CD14-positive monocyte (primary cell): ENCODE measurements at regions of chr5 and their contacts with region 1.

Region 1: DNA sequence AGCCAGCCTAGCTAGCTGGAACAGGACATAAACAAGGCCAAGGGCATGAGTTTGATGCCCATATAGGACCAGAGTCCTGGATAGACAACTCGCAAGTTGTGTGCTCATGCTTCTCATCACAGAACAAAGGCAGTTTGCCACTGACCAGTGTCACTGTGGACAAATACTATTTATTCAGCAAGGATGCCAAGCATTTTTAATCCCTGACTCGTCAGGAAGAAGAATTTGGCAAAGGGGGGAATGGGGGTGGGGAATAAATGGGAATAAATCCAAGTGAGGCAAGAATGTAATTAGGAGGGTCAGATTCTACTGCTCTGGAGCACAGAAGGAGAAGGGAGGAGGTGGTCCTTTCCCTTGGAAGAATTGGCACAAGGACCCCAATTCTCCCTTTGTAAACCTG is 46.8 kb upstream of the ANKRD55 start:
- DNase-seq: no peak
- H3K4me3 ChIP-seq: no peak overlapping the region
- H3K4me3 Mint-ChIP-seq: no peak overlapping the region
- H3K27ac ChIP-seq: no peak overlapping the region
- H3K27ac Mint-ChIP-seq: no peak overlapping the region
- H3K4me1 ChIP-seq: no peaks in the 10 kb centered on the region
- H3K4me1 Mint-ChIP-seq: peaks cover 4% of the 10 kb centered on the region
- H3K27me3 ChIP-seq: no peaks in the 10 kb centered on the region
- H3K27me3 Mint-ChIP-seq: peaks cover 0 to 2% (median 0%) of the 10 kb centered on the region in 3 donors
- CTCF ChIP-seq: no peak

Region 2: DNA sequence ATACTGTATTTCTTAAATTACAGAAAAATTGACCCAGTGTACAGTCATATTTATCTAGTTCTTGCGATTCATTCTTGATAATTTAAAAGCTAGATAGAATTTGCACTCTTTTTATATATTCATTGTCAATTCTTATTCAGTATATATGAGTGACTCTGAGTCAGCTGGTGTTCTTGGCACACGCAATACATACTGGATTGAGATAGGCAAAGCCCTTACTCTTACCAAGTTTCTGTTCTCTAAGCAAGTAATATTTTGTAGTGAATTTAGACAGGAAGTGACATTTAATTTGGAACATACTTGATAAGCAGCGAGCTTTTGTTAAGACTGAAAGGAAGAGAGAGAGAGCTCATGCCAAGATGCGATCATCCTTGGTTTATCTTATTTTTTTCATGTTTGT is 951.6 kb after region 1 on chr5:
- intact Hi-C with region 1: loop called in 1 of 2 experiments (anchors 10 kb)
- DNase-seq: no peak
- H3K4me3 ChIP-seq: no peak overlapping the region
- H3K4me3 Mint-ChIP-seq: no peak overlapping the region
- H3K27ac ChIP-seq: no peak overlapping the region
- H3K27ac Mint-ChIP-seq: peak overlapping the region in 2 of 7 donors; percentile 26 to 77
- H3K4me1 ChIP-seq: no peaks in the 10 kb centered on the region
- H3K4me1 Mint-ChIP-seq: no peaks in the 10 kb centered on the region
- H3K27me3 ChIP-seq: no peaks in the 10 kb centered on the region
- H3K27me3 Mint-ChIP-seq: no peaks in the 10 kb centered on the region
- CTCF ChIP-seq: no peak